ENCODE measurements at regions of chr1 and their contacts with region 1.

Region 1: DNA sequence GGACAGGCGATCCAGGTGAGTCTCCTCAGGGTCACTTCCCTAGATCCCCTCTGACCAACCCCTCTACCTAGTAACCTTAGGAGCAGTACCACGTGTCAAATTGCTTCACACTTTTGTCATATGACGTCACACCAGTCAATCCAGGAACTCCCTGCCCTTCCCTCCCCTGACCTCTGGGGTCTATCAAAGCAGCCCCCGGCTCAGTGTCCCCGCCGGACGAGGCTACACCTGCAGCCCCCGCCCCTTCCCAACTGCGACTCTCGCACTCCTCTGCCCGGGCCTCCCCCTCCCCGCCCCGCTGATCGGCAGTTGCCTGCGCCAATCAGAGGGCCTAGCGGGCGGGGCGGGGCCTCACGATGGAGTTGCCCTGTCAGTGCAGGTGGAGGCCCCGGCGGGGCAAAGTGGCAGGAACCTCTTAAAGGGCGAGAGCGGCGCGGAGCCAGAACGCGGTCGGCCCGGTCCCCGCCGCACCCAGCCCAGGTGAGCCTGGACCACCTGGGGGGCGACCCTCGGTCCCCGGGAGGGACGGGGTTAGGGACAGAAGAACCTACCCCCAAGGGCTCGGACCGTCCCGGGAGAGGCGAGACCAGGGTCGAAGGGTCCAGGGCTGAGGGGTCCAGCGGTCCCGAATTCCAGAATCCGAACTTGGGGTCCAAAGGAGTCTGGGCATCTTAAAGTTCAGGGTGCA is 27.5 kb upstream of the EPB41 start:
- DNase-seq: peak; percentile 94
- H3K4me3 ChIP-seq: peak overlapping the region; percentile 98
- H3K27ac ChIP-seq: peak overlapping the region; percentile 95
- H3K4me1 ChIP-seq: peaks cover 68% of the 10 kb centered on the region
- H3K27me3 ChIP-seq: no peaks in the 10 kb centered on the region
- CTCF ChIP-seq: no peak

Region 2: DNA sequence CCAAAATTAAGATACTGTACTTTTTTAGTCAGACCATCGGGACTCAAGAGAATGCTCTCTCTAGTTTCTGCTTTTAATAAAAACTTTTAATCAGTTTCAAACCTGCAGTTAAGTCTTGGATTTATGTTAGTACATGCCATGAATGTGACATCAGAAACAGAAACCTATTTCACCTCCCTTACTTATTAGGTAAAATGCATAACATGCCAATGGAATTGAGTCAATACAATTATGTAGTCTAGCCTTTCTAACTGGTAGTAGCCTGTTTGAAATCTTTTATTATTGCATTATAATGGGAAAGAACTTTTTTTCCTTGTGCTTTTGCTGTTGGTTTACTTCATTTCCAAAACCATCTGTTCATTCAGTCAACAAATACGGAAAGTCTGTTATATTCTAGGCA is 512.6 kb before region 1 on chr1:
- CTCF ChIA-PET with region 1: no interaction called
- POLR2A ChIA-PET with region 1: no interaction called
- intact Hi-C with region 1: no loop called
- DNase-seq: no peak
- H3K4me3 ChIP-seq: no peak overlapping the region
- H3K27ac ChIP-seq: peak overlapping the region; percentile 52
- H3K4me1 ChIP-seq: peaks cover 6% of the 10 kb centered on the region
- H3K27me3 ChIP-seq: no peaks in the 10 kb centered on the region
- CTCF ChIP-seq: no peak

Region 3: DNA sequence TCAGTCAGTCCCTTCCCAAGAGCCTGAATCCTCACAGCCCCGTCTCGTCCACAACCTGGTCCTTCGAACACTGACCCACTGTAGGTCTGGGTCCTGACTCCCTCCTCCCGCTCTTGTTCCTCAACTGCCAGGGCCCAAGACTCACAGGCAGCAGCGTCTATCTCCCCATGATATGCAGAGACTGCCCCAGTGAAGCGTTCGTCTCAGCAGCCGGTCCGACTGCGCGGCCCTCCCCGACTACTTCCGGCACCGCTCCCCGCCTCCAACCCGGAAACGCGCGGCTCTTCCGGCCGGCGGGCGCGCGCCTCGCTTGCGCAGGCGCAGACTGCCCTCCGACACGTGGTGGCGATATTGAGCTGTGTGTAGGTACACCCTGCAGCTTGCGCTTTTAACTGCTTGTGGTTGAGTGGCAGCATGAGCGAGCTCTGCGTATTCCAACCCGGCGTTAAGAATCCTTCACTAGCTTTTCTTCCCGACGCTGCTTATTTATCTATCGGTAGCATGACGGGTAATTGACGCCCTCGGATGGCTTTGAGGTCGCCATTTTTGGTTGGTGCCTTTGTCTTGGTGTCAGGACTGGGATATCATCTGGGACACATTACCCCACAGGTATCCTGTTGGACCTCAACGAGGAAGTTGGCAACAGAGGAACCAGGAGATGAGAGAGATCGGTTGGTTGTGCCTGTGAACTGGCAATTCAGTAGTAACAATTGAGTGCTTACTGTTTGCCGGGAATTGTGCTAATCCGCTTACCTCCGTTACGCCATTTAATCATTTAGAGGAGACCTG is 243.8 kb before region 1 on chr1 and contains the start of gene TAF12:
- CTCF ChIA-PET with region 1: interaction called, 14 read pairs
- POLR2A ChIA-PET with region 1: interaction called, 11 read pairs
- intact Hi-C with region 1: no loop called
- DNase-seq: peak; percentile 98
- H3K4me3 ChIP-seq: peak within 1 kb of the TSS; percentile 81
- H3K27ac ChIP-seq: peak within 1 kb of the TSS; percentile 82
- H3K4me1 ChIP-seq: peaks cover 16% of the 10 kb centered on the region
- H3K27me3 ChIP-seq: no peaks in the 10 kb centered on the region
- CTCF ChIP-seq: peak; percentile 54
- total RNA-seq, gene TAF12: 17.9 and 22.6 TPM in 2 replicates

Region 4: DNA sequence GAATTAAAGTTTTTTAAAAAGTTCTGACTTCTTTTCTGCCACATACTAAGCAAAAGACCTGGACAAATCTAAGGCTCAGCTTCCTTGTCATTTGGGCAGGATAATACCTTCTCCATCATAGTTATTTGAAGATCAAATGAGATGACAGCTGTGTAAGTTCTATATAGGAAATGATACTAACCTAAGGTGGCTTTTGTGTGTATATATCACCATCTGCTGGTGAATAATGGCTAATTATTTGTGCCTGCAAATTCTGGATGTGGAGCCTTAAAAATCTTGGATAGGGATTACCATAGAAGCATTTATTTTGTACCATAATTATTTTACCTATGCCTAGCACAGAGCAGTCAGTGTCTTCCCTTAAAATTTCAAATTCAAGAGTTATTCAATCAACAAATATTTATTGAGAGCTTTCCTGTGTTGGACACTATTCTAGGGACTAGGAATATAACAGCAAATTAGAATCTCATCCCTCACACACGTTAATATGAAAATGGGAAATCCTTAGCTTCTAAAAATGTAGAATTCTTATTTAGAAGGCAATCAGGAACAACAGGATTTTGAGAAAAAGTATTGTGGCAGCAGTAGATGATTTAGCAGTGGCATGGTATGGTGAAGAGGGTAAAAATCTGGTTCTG is 147.1 kb after region 1 on chr1:
- CTCF ChIA-PET with region 1: interaction called, 50 read pairs
- POLR2A ChIA-PET with region 1: interaction called, 8 read pairs
- intact Hi-C with region 1: loop called (anchors 2 kb)
- DNase-seq: peak; percentile 70
- H3K4me3 ChIP-seq: no peak overlapping the region
- H3K27ac ChIP-seq: no peak overlapping the region
- H3K4me1 ChIP-seq: peaks cover 50% of the 10 kb centered on the region
- H3K27me3 ChIP-seq: no peaks in the 10 kb centered on the region
- CTCF ChIP-seq: peak; percentile 69

Region 5: GRCh38 chr1:29124366-29125236 is 237.7 kb after region 1 on chr1:
- CTCF ChIA-PET with region 1: interaction called, 8 read pairs
- POLR2A ChIA-PET with region 1: interaction called, 4 read pairs
- intact Hi-C with region 1: loop called (anchors 5 kb)
- DNase-seq: peak; percentile 81
- H3K4me3 ChIP-seq: peak overlapping the region; percentile 58
- H3K27ac ChIP-seq: peak overlapping the region; percentile 72
- H3K4me1 ChIP-seq: peaks cover 9% of the 10 kb centered on the region
- H3K27me3 ChIP-seq: no peaks in the 10 kb centered on the region
- CTCF ChIP-seq: peak; percentile 56

Region 6: GRCh38 chr1:29202584-29203340 is 315.9 kb after region 1 on chr1:
- CTCF ChIA-PET with region 1: interaction called, 38 read pairs
- POLR2A ChIA-PET with region 1: no interaction called
- intact Hi-C with region 1: loop called (anchors 1 kb)
- DNase-seq: peak; percentile 95
- H3K4me3 ChIP-seq: no peak overlapping the region
- H3K27ac ChIP-seq: peak overlapping the region; percentile 1
- H3K4me1 ChIP-seq: peaks cover 8% of the 10 kb centered on the region
- H3K27me3 ChIP-seq: no peaks in the 10 kb centered on the region
- CTCF ChIP-seq: peak; percentile 98

Measured in A673 (cell line).